Caco-2 (cell line): ENCODE measurements at regions of chr6 and their contacts with region 1.

Region 1: DNA sequence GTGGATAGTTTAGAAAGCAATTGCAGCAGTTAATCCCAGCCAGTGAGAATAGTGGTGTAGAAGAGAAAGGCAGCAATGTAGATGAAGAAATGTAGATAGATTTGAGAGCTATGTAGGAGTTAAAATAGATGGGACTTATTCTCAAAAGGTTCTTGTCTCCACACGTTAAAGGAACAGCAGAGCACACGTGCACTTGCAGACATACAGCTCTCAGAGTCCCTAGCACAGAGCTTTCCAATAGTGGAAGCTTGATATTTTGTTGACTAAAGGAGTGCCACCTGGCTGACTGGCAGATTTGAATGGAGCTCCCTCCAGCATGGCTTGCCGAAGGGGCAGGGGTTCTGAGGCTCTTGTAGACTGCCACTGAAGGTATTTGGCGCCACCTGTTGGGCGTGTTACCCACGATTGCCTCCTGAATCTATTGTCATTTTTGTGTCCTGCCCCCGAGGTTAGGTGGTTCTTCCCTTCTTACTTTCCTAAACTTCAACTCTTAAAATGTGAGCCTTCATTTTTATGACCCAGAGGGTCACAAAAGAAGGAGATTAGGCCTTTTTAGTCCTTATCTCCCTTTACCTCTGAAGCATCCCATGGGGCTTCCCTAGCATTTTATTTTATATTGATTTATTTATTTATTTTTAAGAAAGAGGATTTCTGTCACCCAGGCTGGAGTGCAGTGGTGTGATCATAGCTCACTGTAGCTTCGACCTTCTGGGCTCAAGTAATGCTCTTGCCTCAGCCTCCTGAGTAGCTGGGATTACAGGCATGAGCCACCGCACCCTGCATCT is 16.4 kb downstream of the BRD2 start:
- DNase-seq: peak; percentile 84 to 86
- H3K4me3 ChIP-seq: no peak overlapping the region
- H3K4me3 Mint-ChIP-seq: peak overlapping the region; percentile 8
- H3K27ac Mint-ChIP-seq: no peak overlapping the region
- H3K4me1 ChIP-seq: peaks cover 17% of the 10 kb centered on the region
- H3K4me1 Mint-ChIP-seq: peaks cover 13% of the 10 kb centered on the region
- H3K27me3 ChIP-seq: no peaks in the 10 kb centered on the region
- H3K27me3 Mint-ChIP-seq: no peaks in the 10 kb centered on the region
- CTCF ChIP-seq: peak; percentile 73 to 81

Region 2: DNA sequence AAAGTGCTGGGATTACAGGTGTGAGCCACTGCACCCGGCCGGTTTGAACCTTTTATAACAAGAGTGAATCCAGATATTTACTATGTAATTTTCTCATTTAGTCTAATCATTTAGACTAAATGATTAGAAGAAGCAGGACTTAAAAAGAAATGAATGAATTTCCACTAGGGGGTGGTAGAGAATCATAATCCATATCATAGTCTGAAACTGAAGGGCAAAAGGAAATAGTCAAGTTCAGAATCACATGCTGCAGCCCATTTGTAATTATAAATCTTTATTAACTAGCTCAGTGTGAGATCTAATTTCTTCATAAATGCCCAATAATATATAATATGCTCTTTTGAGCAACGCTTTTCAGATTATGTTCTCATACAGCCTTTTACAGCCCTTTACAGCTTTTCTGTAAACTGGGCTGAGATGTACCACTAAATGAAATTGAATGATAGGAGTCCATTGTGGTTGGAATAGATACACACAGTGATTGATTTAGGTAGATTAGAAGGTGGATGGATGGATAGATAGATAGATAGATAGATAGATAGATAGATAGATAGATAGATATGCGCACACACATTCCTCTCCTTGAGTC is 99.0 kb before region 1 on chr6:
- CTCF ChIA-PET with region 1: interaction called, 6 read pairs
- POLR2A ChIA-PET with region 1: interaction called, 4 read pairs
- intact Hi-C with region 1: loop called (anchors 1 kb)
- DNase-seq: peak in 1 of 2 experiments; percentile 42
- H3K4me3 ChIP-seq: no peak overlapping the region
- H3K4me3 Mint-ChIP-seq: no peak overlapping the region
- H3K27ac Mint-ChIP-seq: no peak overlapping the region
- H3K4me1 ChIP-seq: no peaks in the 10 kb centered on the region
- H3K4me1 Mint-ChIP-seq: no peaks in the 10 kb centered on the region
- H3K27me3 ChIP-seq: no peaks in the 10 kb centered on the region
- H3K27me3 Mint-ChIP-seq: peaks cover 7% of the 10 kb centered on the region
- CTCF ChIP-seq: peak; percentile 50 to 57

Region 3: GRCh38 chr6:32933636-32934085 is 51.1 kb before region 1 on chr6:
- CTCF ChIA-PET with region 1: interaction called, 51 read pairs
- POLR2A ChIA-PET with region 1: no interaction called
- intact Hi-C with region 1: loop called (anchors 1 kb)
- DNase-seq: peak; percentile 66 to 76
- H3K4me3 ChIP-seq: no peak overlapping the region
- H3K4me3 Mint-ChIP-seq: no peak overlapping the region
- H3K27ac Mint-ChIP-seq: no peak overlapping the region
- H3K4me1 ChIP-seq: no peaks in the 10 kb centered on the region
- H3K4me1 Mint-ChIP-seq: no peaks in the 10 kb centered on the region
- H3K27me3 ChIP-seq: no peaks in the 10 kb centered on the region
- H3K27me3 Mint-ChIP-seq: peaks cover 22% of the 10 kb centered on the region
- CTCF ChIP-seq: peak; percentile 63 to 77

Region 4: DNA sequence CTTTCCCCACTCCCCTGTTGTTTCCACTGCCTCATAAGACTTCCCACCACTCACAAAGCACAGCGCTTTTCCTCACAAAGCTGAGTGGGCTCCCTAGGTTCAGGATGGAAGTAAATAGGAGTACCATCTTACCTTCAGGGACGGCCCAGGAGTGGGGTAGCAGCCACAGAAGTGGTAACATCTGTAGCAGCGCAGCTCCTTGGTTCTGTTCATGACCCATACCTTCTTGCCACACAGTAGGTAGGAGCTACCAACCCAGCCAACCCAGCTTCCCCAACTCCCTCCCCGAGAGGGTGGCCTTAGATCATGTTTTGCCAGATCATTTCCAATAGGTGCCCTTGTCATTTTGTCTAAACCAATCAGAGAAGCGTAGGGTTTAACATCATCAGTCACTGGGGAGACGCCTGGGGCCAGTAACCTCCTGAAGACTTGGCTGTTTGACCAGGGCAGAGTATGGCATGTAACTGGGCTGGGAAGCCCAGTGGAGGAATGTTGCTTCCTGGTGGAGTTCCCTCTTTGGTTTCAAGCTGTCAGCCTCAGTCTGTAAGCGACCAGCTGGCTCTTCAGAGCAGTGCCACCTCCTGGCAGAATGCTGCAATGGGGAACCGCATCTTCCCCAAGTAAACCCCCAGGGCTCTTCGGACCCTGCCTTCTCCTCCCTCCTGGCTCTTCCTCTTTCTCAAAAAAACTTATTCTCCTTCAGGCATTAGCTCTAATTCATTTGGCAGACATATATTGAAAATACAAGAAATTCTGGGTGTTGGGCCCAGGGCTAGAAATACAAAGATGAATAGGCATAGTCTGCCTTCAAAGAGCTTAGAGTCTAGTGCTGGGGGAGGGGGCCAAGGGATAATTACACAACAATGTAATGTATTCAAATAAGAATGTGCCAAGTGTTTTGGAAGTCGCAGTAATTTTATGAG is 31.7 kb before region 1 on chr6 and contains the start of gene HLA-DMA:
- CTCF ChIA-PET with region 1: interaction called, 16 read pairs
- POLR2A ChIA-PET with region 1: interaction called, 3 read pairs
- intact Hi-C with region 1: loop called (anchors 2 kb)
- DNase-seq: peak; percentile 77 to 79
- H3K4me3 ChIP-seq: no peak within 1 kb of the TSS
- H3K4me3 Mint-ChIP-seq: no peak within 1 kb of the TSS
- H3K27ac Mint-ChIP-seq: peak within 1 kb of the TSS; percentile 15
- H3K4me1 ChIP-seq: no peaks in the 10 kb centered on the region
- H3K4me1 Mint-ChIP-seq: peaks cover 7% of the 10 kb centered on the region
- H3K27me3 ChIP-seq: no peaks in the 10 kb centered on the region
- H3K27me3 Mint-ChIP-seq: peaks cover 3% of the 10 kb centered on the region
- CTCF ChIP-seq: peak; percentile 50 to 74
- total RNA-seq, gene HLA-DMA: 1.6 and 2.1 TPM in 2 replicates

Region 5: DNA sequence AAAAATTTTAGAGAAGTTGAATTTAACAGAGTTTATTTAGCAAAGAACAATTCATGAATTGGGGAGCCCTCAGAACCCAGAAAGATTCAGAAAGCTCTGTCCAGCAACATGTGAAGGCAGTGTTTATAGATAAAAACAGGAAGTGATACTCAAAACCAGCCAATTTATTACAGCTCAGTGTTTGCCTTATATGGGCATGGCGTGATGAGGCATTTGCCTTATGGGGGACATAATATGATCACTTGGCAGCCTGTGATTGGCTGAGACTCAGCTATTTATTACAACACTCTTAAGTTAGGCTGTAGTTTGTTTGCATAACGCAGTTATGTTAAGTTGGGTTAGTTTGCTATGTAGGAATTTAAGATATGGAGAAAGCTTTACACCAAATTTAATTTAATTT is 77.2 kb after region 1 on chr6:
- CTCF ChIA-PET with region 1: no interaction called
- POLR2A ChIA-PET with region 1: no interaction called
- intact Hi-C with region 1: no loop called
- DNase-seq: no peak
- H3K4me3 ChIP-seq: no peak overlapping the region
- H3K4me3 Mint-ChIP-seq: no peak overlapping the region
- H3K27ac Mint-ChIP-seq: no peak overlapping the region
- H3K4me1 ChIP-seq: no peaks in the 10 kb centered on the region
- H3K4me1 Mint-ChIP-seq: no peaks in the 10 kb centered on the region
- H3K27me3 ChIP-seq: no peaks in the 10 kb centered on the region
- H3K27me3 Mint-ChIP-seq: no peaks in the 10 kb centered on the region
- CTCF ChIP-seq: no peak